ENCODE measurements at regions of chr10 and their contacts with region 1.

Region 1: DNA sequence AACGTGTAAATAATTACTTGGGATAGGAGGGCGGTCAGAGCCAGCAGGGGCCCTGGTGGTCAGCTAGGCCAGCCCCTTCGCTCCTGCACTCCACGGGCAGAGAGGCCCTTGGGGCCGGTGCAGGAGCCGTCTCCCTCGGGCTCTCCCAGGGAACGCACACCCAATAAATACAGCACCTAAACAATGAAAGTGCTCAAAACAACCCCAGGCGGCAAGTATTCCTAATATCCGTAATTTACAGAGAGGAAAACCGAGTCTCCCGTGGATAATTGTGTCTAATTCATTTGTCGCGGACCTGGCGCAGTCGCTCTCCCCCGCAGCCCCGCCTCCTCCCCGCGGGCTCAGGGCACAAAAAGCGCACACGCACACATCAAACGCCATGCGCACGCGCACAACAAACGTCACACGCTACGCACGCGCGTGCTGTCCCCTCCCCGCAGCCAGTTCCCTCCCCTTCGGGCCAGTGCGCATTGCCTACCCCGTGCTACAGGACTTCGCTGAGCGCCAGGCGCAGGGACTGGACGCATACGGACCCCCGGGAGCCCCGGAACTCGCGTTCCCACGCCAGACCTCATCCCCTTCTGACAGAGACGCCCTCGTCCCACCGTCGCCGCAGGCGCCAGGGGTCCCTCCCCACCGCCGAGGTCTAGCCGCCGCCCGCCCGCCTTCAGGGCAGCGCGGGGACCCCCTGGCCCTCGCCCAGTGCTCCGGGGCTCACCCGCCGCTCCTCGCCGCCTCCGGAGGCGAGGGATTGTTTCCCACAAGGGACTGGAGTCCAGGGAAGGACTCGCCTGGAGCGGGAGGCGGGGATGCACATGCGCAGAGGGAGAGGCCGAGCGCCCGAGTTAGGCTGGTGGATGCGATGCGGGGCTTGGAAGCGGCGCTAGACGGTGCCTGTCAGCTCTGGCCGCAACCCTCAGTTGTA is at the start of gene ZNF248:
- DNase-seq: peak; percentile 98
- total RNA-seq, gene ZNF248: 10.8 TPM

Region 2: DNA sequence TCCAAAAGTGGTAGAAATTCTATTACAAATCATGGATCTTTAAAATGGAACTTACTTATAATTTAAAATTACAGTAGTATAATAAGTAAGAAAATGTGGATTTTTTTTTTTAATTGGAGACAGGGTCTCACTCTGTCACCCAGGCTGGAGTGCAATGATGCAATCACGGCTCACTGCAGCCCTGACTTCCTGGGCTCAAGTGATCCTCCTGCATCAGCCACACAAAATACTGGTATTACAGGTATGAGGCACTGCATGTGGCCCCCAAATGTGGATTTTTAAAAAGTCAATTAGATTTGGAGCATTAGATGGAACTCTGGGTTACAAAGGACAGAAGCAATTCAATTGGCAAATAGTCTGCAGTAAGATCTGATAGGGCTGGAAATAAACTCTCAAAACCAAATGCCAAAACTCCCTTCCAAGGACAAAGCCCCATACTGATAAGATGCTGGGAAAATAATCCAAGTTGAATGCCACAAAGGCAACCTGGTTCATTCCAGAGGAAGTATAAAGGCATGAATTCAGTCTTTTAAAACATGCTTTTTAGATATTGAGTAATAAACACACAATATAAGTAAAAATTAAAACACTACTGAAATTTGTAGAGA is 294.3 kb before region 1 on chr10:
- intact Hi-C with region 1: no loop called
- DNase-seq: no peak

Region 3: DNA sequence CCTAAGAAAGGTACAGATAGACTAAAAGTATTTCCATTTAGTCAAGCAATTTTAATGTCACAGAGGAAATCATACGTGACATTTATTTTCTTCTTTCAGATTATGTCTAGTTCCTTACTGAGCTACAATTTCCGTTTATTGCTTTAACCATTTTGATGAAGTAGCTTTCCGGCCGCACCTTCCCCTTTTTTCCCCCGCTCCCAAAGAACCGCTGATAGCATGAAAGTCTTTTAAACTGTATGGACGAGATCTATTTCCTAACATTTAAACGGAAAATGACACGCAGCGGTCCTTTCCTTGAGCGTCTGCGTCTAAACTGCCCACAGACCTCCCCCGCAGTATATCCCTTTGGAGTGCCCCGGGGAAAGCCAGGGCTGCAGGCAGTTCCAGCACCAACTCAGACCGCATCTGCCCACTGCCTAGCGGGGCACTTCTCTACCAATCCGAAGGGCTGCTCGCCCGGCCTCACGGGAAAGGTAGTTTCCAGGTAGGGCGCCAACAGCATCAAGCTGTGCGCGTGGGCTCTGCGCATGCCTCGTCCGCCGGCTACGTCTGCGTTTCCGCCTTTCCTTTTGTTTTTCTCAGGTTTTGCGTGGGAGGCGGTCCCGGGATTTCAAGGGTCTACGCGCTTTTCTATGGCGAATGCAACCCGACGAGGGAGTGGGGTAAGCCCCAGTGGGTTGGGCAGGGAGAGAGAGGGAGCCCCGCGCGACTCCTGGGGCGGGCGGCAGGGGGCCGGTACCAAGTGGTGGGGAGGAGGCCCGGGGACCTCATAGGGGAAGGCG is 152.8 kb after region 1 on chr10 and contains the start of gene ZNF33A:
- intact Hi-C with region 1: loop called (anchors 2 kb)
- DNase-seq: peak; percentile 95
- total RNA-seq, gene ZNF33A: 18.7 TPM